ENCODE measurements at regions of chr5 and their contacts with region 1.

Region 1: GRCh38 chr5:74919487-74919886 is 53.3 kb upstream of the FAM169A start:
- DNase-seq: peak; percentile 8
- ATAC-seq: peak; percentile 62
- H3K4me3 Mint-ChIP-seq: no peak overlapping the region
- H3K27ac Mint-ChIP-seq: no peak overlapping the region
- H3K4me1 Mint-ChIP-seq: no peaks in the 10 kb centered on the region
- H3K27me3 Mint-ChIP-seq: peaks cover 4% of the 10 kb centered on the region
- CTCF ChIP-seq: peak; percentile 74

Region 2: GRCh38 chr5:74673011-74673790 is 246.3 kb before region 1 on chr5:
- CTCF ChIA-PET with region 1: interaction called, 4 read pairs
- POLR2A ChIA-PET with region 1: interaction called, 3 read pairs
- intact Hi-C with region 1: loop called (anchors 5 kb)
- DNase-seq: no peak
- ATAC-seq: no peak
- H3K4me3 Mint-ChIP-seq: no peak overlapping the region
- H3K27ac Mint-ChIP-seq: no peak overlapping the region
- H3K4me1 Mint-ChIP-seq: no peaks in the 10 kb centered on the region
- H3K27me3 Mint-ChIP-seq: no peaks in the 10 kb centered on the region
- CTCF ChIP-seq: peak; percentile 29

Region 3: GRCh38 chr5:74766849-74767578 is 152.5 kb before region 1 on chr5 and contains the starts of genes GFM2 and NSA2:
- CTCF ChIA-PET with region 1: interaction called, 15 read pairs
- POLR2A ChIA-PET with region 1: no interaction called
- intact Hi-C with region 1: loop called (anchors 10 kb)
- DNase-seq: peak; percentile 96
- ATAC-seq: peak; percentile 91
- H3K4me3 Mint-ChIP-seq: peak within 1 kb of the TSS; percentile 98
- H3K27ac Mint-ChIP-seq: peak within 1 kb of the TSS; percentile 99
- H3K4me1 Mint-ChIP-seq: peaks cover 40% of the 10 kb centered on the region
- H3K27me3 Mint-ChIP-seq: no peaks in the 10 kb centered on the region
- CTCF ChIP-seq: no peak
- total RNA-seq, gene GFM2: 30.1 to 30.5 TPM
- total RNA-seq, gene NSA2: 129 to 142 TPM

Region 4: DNA sequence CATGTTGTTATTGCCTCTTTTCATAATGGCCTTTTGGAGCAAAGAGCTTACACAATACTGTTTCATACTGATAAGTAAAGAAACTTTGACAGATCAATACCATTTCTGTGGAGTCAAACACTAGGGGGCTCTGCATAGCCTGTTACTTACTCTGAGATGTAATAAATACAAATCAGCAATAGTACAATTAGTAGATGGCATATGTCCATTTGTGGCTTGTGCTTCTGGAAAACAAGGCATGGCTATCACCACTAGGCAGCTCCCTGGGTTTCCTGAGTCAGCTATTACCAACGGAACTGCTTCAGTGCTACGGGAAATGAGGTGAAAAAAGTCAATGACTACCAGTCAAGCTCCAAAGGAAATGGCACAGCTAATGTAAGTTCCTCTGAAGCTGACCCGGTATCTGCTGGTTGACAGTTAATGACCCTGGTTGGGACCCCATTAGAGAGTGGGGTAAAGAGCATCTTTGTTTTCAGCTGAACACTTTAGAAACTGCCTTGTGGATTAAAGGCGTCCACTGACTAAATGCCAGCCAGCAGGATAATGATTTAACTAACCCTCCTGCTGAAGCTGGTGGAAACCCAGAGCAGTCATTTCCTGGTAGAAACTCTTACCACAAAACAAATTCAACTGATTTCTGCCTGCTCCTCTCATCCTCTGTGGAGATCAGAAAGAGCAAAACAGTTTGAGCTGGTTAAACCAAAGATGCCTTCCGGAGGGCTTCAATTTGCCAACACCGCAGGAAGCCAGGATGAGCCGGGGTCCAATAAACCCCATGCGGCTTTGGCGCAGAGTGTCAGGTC is 15.7 kb after region 1 on chr5:
- CTCF ChIA-PET with region 1: interaction called, 22 read pairs
- POLR2A ChIA-PET with region 1: interaction called, 3 read pairs
- intact Hi-C with region 1: no loop called
- DNase-seq: peak; percentile 45
- ATAC-seq: peak; percentile 87
- H3K4me3 Mint-ChIP-seq: peak overlapping the region; percentile 46
- H3K27ac Mint-ChIP-seq: peak overlapping the region; percentile 83
- H3K4me1 Mint-ChIP-seq: peaks cover 27% of the 10 kb centered on the region
- H3K27me3 Mint-ChIP-seq: peaks cover 4% of the 10 kb centered on the region
- CTCF ChIP-seq: peak; percentile 66